Heart left ventricle (tissue), 16 donors: ENCODE measurements at regions of chr20 and their contacts with region 1.

Region 1: GRCh38 chr20:14860410-14860814 is 523.0 kb upstream of the FLRT3 start:
- DNase-seq: no peak
- ATAC-seq: no peak
- H3K4me3 ChIP-seq: no peak overlapping the region
- H3K27ac ChIP-seq: no peak overlapping the region
- H3K4me1 ChIP-seq: no peaks in the 10 kb centered on the region
- H3K27me3 ChIP-seq: no peaks in the 10 kb centered on the region
- CTCF ChIP-seq: no peak
- POLR2A ChIP-seq: no peak

Region 2: DNA sequence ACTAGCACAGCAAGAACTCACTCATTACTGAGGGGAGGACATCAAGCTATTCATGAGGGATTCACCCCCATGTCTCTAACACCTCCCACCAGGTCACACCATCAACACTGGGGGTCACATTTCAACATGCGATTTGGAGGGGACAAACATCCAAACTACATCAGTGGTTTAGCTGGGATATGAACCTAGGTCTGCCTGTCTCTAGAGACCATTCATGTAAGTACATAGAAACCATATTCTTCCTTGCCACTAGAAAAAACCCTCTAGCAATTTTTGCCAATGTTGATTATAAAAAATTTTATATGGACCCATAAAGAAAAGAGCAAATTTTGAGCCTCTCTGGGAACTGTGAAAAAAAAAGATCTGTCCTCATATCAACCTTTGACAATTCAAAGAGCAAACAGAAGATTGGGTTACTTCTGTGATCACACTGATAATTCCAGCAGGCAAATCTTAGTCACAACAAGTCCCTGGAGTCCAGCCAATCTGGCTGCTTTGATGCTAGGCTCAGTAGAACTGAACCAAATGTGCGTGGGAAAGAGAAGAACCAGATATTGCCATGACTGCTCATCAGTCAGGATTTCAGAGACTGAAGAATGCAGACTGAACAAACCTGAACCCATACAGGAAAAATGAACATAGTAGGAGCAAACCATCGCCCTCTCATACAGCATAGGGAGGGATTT is 84.8 kb before region 1 on chr20:
- intact Hi-C with region 1: no loop called
- DNase-seq: no peak
- ATAC-seq: no peak
- H3K4me3 ChIP-seq: no peak overlapping the region
- H3K27ac ChIP-seq: no peak overlapping the region
- H3K4me1 ChIP-seq: no peaks in the 10 kb centered on the region
- H3K27me3 ChIP-seq: no peaks in the 10 kb centered on the region
- CTCF ChIP-seq: no peak
- POLR2A ChIP-seq: no peak

Region 3: DNA sequence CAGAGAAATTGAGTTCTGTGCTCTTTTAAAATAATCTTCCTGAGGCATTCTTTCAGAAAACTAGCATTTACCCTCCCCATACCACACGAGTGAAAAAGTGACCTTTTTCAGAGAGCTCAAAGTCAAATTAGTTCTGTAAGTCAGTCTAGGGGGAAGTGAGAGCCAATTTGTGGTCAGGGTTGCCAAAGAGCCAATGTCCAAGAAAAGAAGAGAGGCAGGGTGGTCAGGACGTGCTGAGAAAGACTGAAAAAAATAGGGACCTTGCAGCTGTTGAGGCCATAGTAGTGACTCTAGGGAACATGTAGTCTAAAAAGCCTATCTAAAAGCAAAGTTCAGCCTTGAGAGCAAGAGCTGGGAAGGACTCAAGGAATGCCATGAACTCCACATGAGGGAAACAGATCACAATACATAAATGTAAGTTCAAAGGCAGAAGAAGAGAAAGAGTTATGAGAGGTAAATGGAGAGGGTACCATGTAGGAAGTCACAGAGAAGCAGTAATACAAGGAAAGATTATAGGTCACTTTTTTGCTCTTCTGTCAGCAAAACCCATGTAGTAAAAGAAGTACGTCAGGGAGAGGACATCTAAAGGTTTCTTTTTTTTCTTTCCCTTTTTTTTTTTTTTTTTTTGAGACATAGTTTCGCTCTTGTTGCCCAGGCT is 42.1 kb after region 1 on chr20:
- intact Hi-C with region 1: loop called in 1 of 10 experiments (anchors 5 kb)
- DNase-seq: no peak
- ATAC-seq: no peak
- H3K4me3 ChIP-seq: no peak overlapping the region
- H3K27ac ChIP-seq: no peak overlapping the region
- H3K4me1 ChIP-seq: no peaks in the 10 kb centered on the region
- H3K27me3 ChIP-seq: no peaks in the 10 kb centered on the region
- CTCF ChIP-seq: no peak
- POLR2A ChIP-seq: no peak

Region 4: GRCh38 chr20:14919480-14920440 is 59.3 kb after region 1 on chr20:
- intact Hi-C with region 1: loop called in 1 of 10 experiments (anchors 10 kb)
- DNase-seq: no peak
- ATAC-seq: no peak
- H3K4me3 ChIP-seq: no peak overlapping the region
- H3K27ac ChIP-seq: no peak overlapping the region
- H3K4me1 ChIP-seq: peaks cover 0 to 4% (median 0%) of the 10 kb centered on the region in 12 donors
- H3K27me3 ChIP-seq: peaks cover 0 to 3% (median 0%) of the 10 kb centered on the region in 9 donors
- CTCF ChIP-seq: no peak
- POLR2A ChIP-seq: no peak